Naive thymus-derived CD4-positive, alpha-beta T cell (primary cell): ENCODE measurements at regions of chr1 and their contacts with region 1.

Region 1: GRCh38 chr1:40257688-40258444 is at the start of gene ZMPSTE24:
- DNase-seq: peak; percentile 84 to 98 (median 95)
- ATAC-seq: peak; percentile 98
- H3K4me3 ChIP-seq: peak within 1 kb of the TSS; percentile 98
- H3K4me3 Mint-ChIP-seq: peak within 1 kb of the TSS; percentile 91 to 100 (median 98)
- H3K27ac ChIP-seq: peak within 1 kb of the TSS; percentile 98
- H3K27ac Mint-ChIP-seq: peak within 1 kb of the TSS; percentile 97 to 100 (median 100)
- H3K4me1 ChIP-seq: peaks cover 14% of the 10 kb centered on the region in 2 donors
- H3K4me1 Mint-ChIP-seq: peaks cover 27 to 71% (median 60%) of the 10 kb centered on the region in 7 donors
- H3K27me3 ChIP-seq: no peaks in the 10 kb centered on the region
- H3K27me3 Mint-ChIP-seq: peaks cover 0 to 4% (median 0%) of the 10 kb centered on the region in 5 donors
- total RNA-seq, gene ZMPSTE24: 9.5 to 31.0 (median 14.1) TPM

Region 2: GRCh38 chr1:40161125-40161887 is 96.6 kb before region 1 on chr1 and contains the start of gene RLF:
- CTCF ChIA-PET with region 1: no interaction called
- POLR2A ChIA-PET with region 1: interaction called, 4 read pairs
- intact Hi-C with region 1: loop called (anchors 1 kb)
- DNase-seq: peak; percentile 91 to 97 (median 95)
- ATAC-seq: peak; percentile 99
- H3K4me3 ChIP-seq: peak within 1 kb of the TSS; percentile 76
- H3K4me3 Mint-ChIP-seq: no peak within 1 kb of the TSS
- H3K27ac ChIP-seq: peak within 1 kb of the TSS; percentile 88
- H3K27ac Mint-ChIP-seq: peak within 1 kb of the TSS in 2 of 9 donors; percentile 99 to 100
- H3K4me1 ChIP-seq: peaks cover 22 to 25% of the 10 kb centered on the region in 2 donors
- H3K4me1 Mint-ChIP-seq: peaks cover 5 to 19% (median 7%) of the 10 kb centered on the region in 7 donors
- H3K27me3 ChIP-seq: no peaks in the 10 kb centered on the region
- H3K27me3 Mint-ChIP-seq: no peaks in the 10 kb centered on the region
- total RNA-seq, gene RLF: 20.9 to 28.6 (median 24.7) TPM

Region 3: GRCh38 chr1:40241362-40241761 is 16.5 kb before region 1 on chr1:
- CTCF ChIA-PET with region 1: no interaction called
- POLR2A ChIA-PET with region 1: interaction called, 8 read pairs
- intact Hi-C with region 1: loop called in 1 of 2 experiments (anchors 2 kb)
- DNase-seq: no peak
- ATAC-seq: peak; percentile 43
- H3K4me3 ChIP-seq: no peak overlapping the region
- H3K4me3 Mint-ChIP-seq: peak overlapping the region in 3 of 10 donors; percentile 2 to 64 (median 8)
- H3K27ac ChIP-seq: no peak overlapping the region
- H3K27ac Mint-ChIP-seq: peak overlapping the region in 6 of 9 donors; percentile 2 to 81 (median 18)
- H3K4me1 ChIP-seq: peaks cover 12 to 14% of the 10 kb centered on the region in 2 donors
- H3K4me1 Mint-ChIP-seq: peaks cover 7 to 75% (median 19%) of the 10 kb centered on the region in 7 donors
- H3K27me3 ChIP-seq: no peaks in the 10 kb centered on the region
- H3K27me3 Mint-ChIP-seq: no peaks in the 10 kb centered on the region

Region 4: GRCh38 chr1:40385437-40386358 is 127.8 kb after region 1 on chr1:
- CTCF ChIA-PET with region 1: no interaction called
- POLR2A ChIA-PET with region 1: no interaction called
- intact Hi-C with region 1: loop called in 1 of 2 experiments (anchors 5 kb)
- DNase-seq: peak in 8 of 9 donors; percentile 55 to 97 (median 94)
- ATAC-seq: peak; percentile 86
- H3K4me3 ChIP-seq: peak overlapping the region; percentile 48
- H3K4me3 Mint-ChIP-seq: peak overlapping the region; percentile 79 to 99 (median 87)
- H3K27ac ChIP-seq: peak overlapping the region; percentile 99
- H3K27ac Mint-ChIP-seq: peak overlapping the region; percentile 97 to 99 (median 98)
- H3K4me1 ChIP-seq: peaks cover 82 to 84% of the 10 kb centered on the region in 2 donors
- H3K4me1 Mint-ChIP-seq: peaks cover 71 to 94% (median 90%) of the 10 kb centered on the region in 7 donors
- H3K27me3 ChIP-seq: no peaks in the 10 kb centered on the region
- H3K27me3 Mint-ChIP-seq: no peaks in the 10 kb centered on the region

Region 5: DNA sequence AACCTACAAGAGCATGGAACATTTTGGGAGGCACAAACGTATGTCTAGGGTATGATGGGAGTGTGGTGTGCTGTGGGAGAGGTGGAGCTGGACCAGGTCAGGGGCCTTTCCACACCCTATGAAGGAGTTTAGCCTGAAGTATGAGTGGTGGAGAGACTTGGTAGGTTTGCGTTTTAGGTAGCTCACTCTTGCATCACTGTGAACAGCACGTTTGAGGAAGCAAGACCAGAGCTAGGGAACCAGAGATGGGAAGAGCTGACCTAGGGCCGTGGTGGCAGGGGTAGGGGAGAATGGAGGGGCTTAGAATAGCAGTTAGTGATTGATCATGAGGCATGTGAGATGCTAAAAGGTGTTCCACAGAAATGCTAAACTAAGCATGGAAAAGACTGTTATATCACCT is 167.3 kb after region 1 on chr1:
- CTCF ChIA-PET with region 1: no interaction called
- POLR2A ChIA-PET with region 1: no interaction called
- intact Hi-C with region 1: no loop called
- DNase-seq: no peak
- ATAC-seq: no peak
- H3K4me3 ChIP-seq: no peak overlapping the region
- H3K4me3 Mint-ChIP-seq: no peak overlapping the region
- H3K27ac ChIP-seq: no peak overlapping the region
- H3K27ac Mint-ChIP-seq: peak overlapping the region in 4 of 9 donors; percentile 21 to 76 (median 58)
- H3K4me1 ChIP-seq: no peaks in the 10 kb centered on the region
- H3K4me1 Mint-ChIP-seq: peaks cover 0 to 14% (median 10%) of the 10 kb centered on the region in 7 donors
- H3K27me3 ChIP-seq: no peaks in the 10 kb centered on the region
- H3K27me3 Mint-ChIP-seq: no peaks in the 10 kb centered on the region

Region 6: DNA sequence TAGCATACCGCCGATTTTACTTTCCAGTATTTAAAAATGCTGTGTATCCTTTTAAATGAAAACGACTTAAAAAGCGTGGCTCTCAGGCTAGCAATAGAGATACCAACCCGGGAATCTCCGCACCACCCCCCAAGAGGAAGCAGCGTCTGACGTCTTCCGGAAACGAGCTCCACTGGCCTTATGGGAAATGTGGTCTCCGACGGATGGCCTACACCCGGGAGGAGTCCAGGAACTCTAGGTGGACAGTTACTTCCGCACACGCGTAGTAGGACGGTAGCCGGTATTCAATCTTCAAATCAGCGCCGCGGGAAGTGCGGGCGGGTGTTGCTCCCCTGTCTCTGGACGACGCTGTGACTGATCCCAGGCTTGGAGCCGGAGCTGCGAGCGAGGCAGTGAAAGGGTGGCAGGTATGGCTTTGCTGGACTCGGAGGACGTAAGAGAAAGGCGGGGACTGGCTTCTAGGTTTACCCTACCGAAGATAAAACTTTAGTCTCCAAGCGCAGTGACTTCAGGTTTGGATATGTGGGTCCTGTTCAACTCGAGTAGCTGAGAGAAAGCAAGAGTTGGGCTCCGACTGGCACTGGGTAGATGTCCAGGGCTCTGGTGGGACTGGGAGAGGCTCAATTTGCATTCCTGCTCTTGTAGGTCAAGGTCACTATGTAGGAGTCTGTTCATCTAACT is 273.7 kb after region 1 on chr1 and contains the start of gene ZNF684:
- CTCF ChIA-PET with region 1: no interaction called
- POLR2A ChIA-PET with region 1: no interaction called
- intact Hi-C with region 1: loop called (anchors 1 kb)
- DNase-seq: peak; percentile 57 to 87 (median 81)
- ATAC-seq: peak; percentile 99
- H3K4me3 ChIP-seq: peak within 1 kb of the TSS; percentile 78
- H3K4me3 Mint-ChIP-seq: peak within 1 kb of the TSS; percentile 89 to 100 (median 98)
- H3K27ac ChIP-seq: peak within 1 kb of the TSS; percentile 80
- H3K27ac Mint-ChIP-seq: peak within 1 kb of the TSS; percentile 59 to 96 (median 93)
- H3K4me1 ChIP-seq: peaks cover 14 to 17% of the 10 kb centered on the region in 2 donors
- H3K4me1 Mint-ChIP-seq: peaks cover 22 to 29% (median 25%) of the 10 kb centered on the region in 7 donors
- H3K27me3 ChIP-seq: no peaks in the 10 kb centered on the region
- H3K27me3 Mint-ChIP-seq: peaks cover 4 to 24% (median 17%) of the 10 kb centered on the region in 5 donors
- total RNA-seq, gene ZNF684: 1.3 to 6.6 (median 3.7) TPM